ENCODE measurements at regions of chr2 and their contacts with region 1.

Region 1: DNA sequence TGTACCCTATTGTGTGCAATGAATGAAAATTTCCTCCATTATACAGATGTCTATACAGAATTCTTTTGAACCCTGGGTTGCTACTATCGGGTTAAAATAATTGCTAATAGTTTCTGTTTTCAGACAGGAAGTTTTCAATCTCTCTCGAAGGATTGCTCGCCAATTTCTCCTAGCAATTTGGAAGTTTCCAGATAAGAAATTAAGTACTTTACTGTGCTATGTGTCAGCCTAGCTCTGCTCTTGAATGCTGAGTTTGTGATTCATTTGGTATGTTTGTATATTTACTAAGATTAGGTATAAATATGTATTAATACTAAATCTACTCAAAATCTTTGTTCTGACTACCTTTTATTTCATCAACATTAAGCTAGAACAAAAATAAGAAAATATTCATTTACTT is 74.6 kb upstream of the ARL5A start:
- DNase-seq: no peak
- ATAC-seq: no peak
- H3K4me3 Mint-ChIP-seq: no peak overlapping the region
- H3K27ac Mint-ChIP-seq: no peak overlapping the region
- H3K4me1 Mint-ChIP-seq: no peaks in the 10 kb centered on the region
- H3K27me3 Mint-ChIP-seq: peaks cover 4% of the 10 kb centered on the region

Region 2: DNA sequence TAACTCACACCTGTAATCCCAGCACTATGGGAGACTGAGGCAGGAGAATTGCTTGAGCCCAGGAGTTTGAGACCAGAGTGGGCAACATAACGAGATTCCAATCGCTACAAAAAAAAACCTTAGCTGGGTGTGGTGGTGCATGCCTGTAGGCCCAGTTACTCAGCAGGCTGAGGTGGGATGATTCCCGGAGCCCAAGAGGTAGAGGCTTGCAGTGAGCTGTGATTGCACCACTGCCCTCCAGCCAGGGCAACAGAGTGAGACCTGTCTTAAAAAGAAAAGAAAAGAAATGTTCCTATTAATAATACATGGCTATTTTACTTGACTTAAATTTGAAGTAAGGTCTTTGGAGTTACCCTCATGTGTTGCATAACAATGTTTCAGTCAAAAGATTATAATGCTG is 348.5 kb before region 1 on chr2:
- CTCF ChIA-PET with region 1: no interaction called
- POLR2A ChIA-PET with region 1: interaction called, 11 read pairs
- intact Hi-C with region 1: no loop called
- DNase-seq: no peak
- ATAC-seq: no peak
- H3K4me3 Mint-ChIP-seq: no peak overlapping the region
- H3K27ac Mint-ChIP-seq: no peak overlapping the region
- H3K4me1 Mint-ChIP-seq: no peaks in the 10 kb centered on the region
- H3K27me3 Mint-ChIP-seq: no peaks in the 10 kb centered on the region

Region 3: DNA sequence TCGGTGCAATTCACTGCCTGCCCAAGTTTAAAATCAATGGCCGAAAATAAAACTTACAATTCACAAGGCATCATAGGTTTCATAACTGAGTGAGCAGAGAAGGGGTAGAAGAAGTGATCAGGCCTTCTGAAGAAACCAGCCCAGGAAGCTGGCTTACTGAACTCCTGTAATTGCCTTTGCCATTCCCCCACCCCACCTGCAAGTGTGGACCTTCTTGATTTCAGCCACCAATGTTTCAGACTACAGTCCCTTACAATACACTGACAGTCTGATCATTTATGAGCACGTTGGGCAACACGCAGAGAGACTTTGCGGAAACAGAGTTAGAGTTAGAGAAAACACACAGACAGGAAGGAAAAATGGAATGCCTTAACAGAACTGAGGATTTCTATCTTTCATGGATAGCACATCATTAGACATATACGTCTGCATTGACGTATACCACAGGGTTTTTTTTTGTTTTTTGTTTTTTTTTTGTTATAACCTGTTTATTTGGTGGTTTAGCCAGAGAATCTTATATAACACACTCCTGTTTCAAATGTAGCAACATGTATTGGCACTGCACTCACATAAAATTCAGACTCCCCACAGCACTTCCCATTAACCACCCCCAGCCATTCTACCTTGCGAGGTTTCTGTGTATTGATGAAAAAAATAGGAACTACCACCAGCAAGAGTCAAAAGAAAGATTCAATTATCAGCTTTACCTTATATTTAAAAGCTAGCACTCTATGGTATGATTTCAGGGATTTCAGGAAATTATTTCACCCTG is 69.6 kb after region 1 on chr2:
- CTCF ChIA-PET with region 1: no interaction called
- POLR2A ChIA-PET with region 1: no interaction called
- intact Hi-C with region 1: no loop called
- DNase-seq: no peak
- ATAC-seq: no peak
- H3K4me3 Mint-ChIP-seq: no peak overlapping the region
- H3K27ac Mint-ChIP-seq: no peak overlapping the region
- H3K4me1 Mint-ChIP-seq: peaks cover 4% of the 10 kb centered on the region
- H3K27me3 Mint-ChIP-seq: no peaks in the 10 kb centered on the region

Measured in activated CD4-positive, alpha-beta T cell treated with anti-CD3 and anti-CD28 coated beads for 36 hours (primary cell).